Dorsolateral prefrontal cortex (tissue), 120 donors: ENCODE measurements at regions of chr1 and their contacts with region 1.

Region 1: DNA sequence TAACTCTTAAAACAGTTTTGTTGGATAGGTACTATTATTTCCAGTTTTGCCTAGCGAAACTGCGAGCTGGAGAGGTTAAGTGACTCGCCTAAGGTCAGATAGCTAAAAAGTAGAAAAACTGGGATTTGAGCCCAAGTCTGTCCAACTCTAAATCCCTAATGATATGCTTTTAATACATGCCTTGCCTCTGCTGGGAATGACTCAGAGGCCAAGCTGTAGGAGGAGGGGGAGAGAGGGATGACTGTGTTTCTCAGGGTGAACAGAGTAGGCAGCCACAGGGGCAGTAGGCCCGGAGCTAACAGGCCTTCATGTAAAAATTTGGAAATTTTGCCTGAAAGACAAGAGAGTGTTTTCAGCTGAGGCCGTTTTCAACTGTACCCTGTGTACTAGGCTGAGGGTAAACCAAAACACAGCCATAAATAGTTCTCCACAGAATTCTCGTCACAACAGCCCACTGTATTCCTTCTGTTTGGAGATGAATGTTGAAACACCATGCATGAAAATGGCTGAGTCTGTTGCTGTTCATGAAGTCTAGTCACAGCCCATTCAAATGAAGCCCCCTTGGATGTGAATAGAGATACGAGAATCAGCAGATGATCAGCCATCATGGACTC is 107.5 kb upstream of the HOOK1 start:
- DNase-seq: peak in 1 of 10 donors; percentile 56
- H3K4me3 ChIP-seq: no peak overlapping the region
- H3K27ac ChIP-seq: peak overlapping the region in 25 of 59 donors; percentile 0 to 73 (median 25)
- H3K27me3 ChIP-seq: no peaks in the 10 kb centered on the region
- CTCF ChIP-seq: no peak

Region 2: GRCh38 chr1:59759156-59759925 is 52.1 kb after region 1 on chr1:
- intact Hi-C with region 1: loop called (anchors 5 to 10 kb)
- DNase-seq: peak; percentile 62 to 88 (median 82)
- H3K4me3 ChIP-seq: peak overlapping the region in 45 of 59 donors; percentile 3 to 59 (median 35)
- H3K27ac ChIP-seq: peak overlapping the region in 9 of 59 donors; percentile 8 to 59 (median 30)
- H3K27me3 ChIP-seq: no peaks in the 10 kb centered on the region
- CTCF ChIP-seq: peak; percentile 68 to 100 (median 96)

Region 3: DNA sequence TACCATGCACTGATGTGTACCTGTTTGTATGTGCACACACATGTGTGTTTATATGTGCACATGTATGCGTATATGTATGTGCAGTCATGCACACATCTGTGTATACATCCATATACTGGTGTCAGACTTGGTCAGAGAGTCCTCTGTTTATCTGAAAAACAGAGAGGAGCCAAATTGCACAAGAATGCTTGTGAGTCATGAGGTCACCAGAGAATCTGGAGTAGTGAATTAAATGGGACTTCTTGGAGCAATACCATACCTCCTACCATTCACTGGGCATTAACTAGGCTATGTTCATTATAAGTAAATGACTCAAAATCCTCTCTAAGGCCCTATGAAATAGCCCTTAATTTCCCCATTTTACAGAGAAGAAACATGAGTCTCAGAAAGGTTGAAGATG is 638.3 kb after region 1 on chr1:
- intact Hi-C with region 1: no loop called
- DNase-seq: no peak
- H3K4me3 ChIP-seq: no peak overlapping the region
- H3K27ac ChIP-seq: no peak overlapping the region
- H3K27me3 ChIP-seq: peaks cover 0 to 2% (median 0%) of the 10 kb centered on the region in 45 donors
- CTCF ChIP-seq: no peak